ENCODE measurements at regions of chr4 and their contacts with region 1.

Region 1: DNA sequence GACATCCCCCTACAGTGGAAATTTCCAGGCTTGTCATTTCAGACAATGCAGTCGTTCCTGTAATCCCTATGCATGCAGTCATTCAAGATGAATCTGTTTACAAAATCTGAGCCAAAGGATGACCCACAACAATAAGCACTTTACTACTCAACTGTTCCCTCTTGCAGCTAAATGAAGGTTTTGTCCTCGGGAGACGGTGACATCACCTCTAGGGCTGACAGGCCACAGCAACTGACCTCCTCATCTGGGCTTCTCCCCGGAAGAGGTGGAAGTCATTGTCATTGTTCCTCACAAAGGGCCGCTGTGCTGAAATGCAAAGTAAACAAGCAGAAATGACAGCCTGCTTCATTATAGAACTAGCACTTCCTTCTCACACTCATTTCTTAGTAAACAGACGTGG is 29.2 kb downstream of the CLRN2 start:
- DNase-seq: no peak
- ATAC-seq: no peak
- H3K4me3 Mint-ChIP-seq: no peak overlapping the region
- H3K27ac Mint-ChIP-seq: no peak overlapping the region
- H3K4me1 Mint-ChIP-seq: no peaks in the 10 kb centered on the region
- H3K27me3 Mint-ChIP-seq: peaks cover 15% of the 10 kb centered on the region

Region 2: GRCh38 chr4:16893141-16893651 is 651.0 kb before region 1 on chr4:
- CTCF ChIA-PET with region 1: no interaction called
- POLR2A ChIA-PET with region 1: no interaction called
- intact Hi-C with region 1: no loop called
- DNase-seq: peak; percentile 57
- ATAC-seq: peak; percentile 58
- H3K4me3 Mint-ChIP-seq: no peak overlapping the region
- H3K27ac Mint-ChIP-seq: peak overlapping the region; percentile 21
- H3K4me1 Mint-ChIP-seq: peaks cover 36% of the 10 kb centered on the region
- H3K27me3 Mint-ChIP-seq: peaks cover 6% of the 10 kb centered on the region

Region 3: GRCh38 chr4:17468371-17469221 is 75.6 kb before region 1 on chr4:
- CTCF ChIA-PET with region 1: no interaction called
- POLR2A ChIA-PET with region 1: no interaction called
- intact Hi-C with region 1: no loop called
- DNase-seq: peak; percentile 23
- ATAC-seq: no peak
- H3K4me3 Mint-ChIP-seq: no peak overlapping the region
- H3K27ac Mint-ChIP-seq: no peak overlapping the region
- H3K4me1 Mint-ChIP-seq: peaks cover 2% of the 10 kb centered on the region
- H3K27me3 Mint-ChIP-seq: no peaks in the 10 kb centered on the region

Region 4: GRCh38 chr4:17576932-17577665 is 32.9 kb after region 1 on chr4 and contains the start of gene LAP3:
- CTCF ChIA-PET with region 1: interaction called, 12 read pairs
- POLR2A ChIA-PET with region 1: interaction called, 8 read pairs
- intact Hi-C with region 1: loop called (anchors 1 kb)
- DNase-seq: peak; percentile 99
- ATAC-seq: peak; percentile 85
- H3K4me3 Mint-ChIP-seq: peak within 1 kb of the TSS; percentile 91
- H3K27ac Mint-ChIP-seq: peak within 1 kb of the TSS; percentile 94
- H3K4me1 Mint-ChIP-seq: peaks cover 29% of the 10 kb centered on the region
- H3K27me3 Mint-ChIP-seq: no peaks in the 10 kb centered on the region
- total RNA-seq, gene LAP3: 126 to 128 TPM

Region 5: DNA sequence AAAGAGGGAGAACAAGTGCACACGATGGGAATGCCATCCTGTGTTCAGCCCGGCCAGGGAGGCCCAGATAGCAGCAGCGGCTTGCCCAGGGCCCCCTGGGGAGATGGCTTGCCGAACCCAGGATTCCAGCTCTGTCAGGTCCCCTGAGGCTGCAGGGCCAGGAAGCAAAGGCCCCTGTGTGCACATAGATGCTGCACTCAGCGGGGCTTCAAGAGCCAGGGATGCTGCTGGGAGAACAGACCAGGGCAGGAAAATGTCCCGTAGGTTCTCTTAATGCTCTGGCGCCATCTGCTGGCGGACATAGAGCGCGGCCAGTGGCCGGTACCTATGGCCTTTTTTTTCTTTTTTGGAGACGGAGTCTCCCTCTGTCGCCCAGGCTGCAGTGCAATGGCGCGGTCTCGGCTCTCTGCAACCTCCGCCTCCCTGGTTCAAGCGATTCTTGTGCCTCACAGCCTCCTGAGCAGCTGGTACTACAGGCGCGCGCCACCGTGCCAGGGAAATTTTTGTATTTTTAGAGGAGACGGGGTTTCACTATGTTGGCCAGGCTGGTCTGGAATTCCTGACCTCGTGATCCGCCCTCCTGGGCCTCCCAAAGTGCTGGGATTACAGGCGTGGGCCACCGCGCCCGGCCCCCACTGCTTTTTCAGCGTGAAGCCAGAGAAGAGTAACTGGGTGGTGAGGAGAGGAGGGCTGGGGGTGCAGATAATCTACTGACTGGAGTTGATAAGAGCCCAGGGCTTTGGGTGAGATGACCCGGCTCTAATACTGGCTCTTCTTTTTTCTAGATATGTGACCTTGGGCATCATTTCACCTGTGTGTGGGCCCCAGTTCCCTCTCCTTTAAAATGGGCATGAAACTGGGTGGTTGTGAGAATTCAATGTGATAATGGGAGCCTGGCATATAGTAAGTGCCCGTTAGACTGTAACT is 92.8 kb after region 1 on chr4:
- CTCF ChIA-PET with region 1: interaction called, 40 read pairs
- POLR2A ChIA-PET with region 1: no interaction called
- intact Hi-C with region 1: loop called (anchors 1 kb)
- DNase-seq: peak; percentile 87
- ATAC-seq: peak; percentile 95
- H3K4me3 Mint-ChIP-seq: no peak overlapping the region
- H3K27ac Mint-ChIP-seq: no peak overlapping the region
- H3K4me1 Mint-ChIP-seq: no peaks in the 10 kb centered on the region
- H3K27me3 Mint-ChIP-seq: no peaks in the 10 kb centered on the region

Region 6: GRCh38 chr4:18366892-18367291 is 822.7 kb after region 1 on chr4:
- CTCF ChIA-PET with region 1: no interaction called
- POLR2A ChIA-PET with region 1: no interaction called
- intact Hi-C with region 1: loop called in 1 of 2 experiments (anchors 2 kb)
- DNase-seq: peak; percentile 6
- ATAC-seq: peak; percentile 78
- H3K4me3 Mint-ChIP-seq: no peak overlapping the region
- H3K27ac Mint-ChIP-seq: no peak overlapping the region
- H3K4me1 Mint-ChIP-seq: no peaks in the 10 kb centered on the region
- H3K27me3 Mint-ChIP-seq: peaks cover 17% of the 10 kb centered on the region

Measured in activated CD4-positive, alpha-beta T cell treated with anti-CD3 and anti-CD28 coated beads for 36 hours (primary cell).